Astrocyte of the cerebellum (primary cell): ENCODE measurements at regions of chr15 and their contacts with region 1.

Region 1: DNA sequence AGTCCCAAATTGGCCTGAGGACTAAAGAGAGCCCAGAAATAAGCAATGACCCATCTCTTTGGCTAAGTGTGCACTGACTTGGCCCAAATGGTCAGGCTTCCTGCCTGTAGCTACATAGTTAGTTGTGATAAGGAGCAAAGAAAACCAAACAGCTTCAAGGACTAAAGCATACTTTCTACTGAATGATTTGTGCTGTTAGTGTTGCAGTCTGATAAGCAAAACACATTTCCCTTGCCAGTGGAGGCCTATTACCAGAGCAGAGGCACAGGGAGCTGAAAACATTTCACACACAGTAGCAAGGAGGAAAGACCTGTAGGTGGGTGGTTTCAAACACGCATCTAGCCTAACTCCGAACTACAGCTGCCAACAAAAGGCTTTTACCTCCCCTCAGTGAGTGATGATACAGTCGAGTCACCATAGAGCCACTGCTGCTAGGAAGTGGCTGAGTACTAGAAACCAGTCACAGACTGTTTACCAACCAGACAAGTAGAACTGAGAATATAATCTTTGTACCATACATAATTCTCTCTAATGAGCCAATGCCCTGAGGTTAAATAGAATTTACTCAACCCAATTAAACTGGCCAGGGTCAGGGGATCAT is 222.3 kb upstream of the THBS1 start:
- DNase-seq: no peak
- H3K4me3 ChIP-seq: no peak overlapping the region
- CTCF ChIP-seq: no peak

Region 2: DNA sequence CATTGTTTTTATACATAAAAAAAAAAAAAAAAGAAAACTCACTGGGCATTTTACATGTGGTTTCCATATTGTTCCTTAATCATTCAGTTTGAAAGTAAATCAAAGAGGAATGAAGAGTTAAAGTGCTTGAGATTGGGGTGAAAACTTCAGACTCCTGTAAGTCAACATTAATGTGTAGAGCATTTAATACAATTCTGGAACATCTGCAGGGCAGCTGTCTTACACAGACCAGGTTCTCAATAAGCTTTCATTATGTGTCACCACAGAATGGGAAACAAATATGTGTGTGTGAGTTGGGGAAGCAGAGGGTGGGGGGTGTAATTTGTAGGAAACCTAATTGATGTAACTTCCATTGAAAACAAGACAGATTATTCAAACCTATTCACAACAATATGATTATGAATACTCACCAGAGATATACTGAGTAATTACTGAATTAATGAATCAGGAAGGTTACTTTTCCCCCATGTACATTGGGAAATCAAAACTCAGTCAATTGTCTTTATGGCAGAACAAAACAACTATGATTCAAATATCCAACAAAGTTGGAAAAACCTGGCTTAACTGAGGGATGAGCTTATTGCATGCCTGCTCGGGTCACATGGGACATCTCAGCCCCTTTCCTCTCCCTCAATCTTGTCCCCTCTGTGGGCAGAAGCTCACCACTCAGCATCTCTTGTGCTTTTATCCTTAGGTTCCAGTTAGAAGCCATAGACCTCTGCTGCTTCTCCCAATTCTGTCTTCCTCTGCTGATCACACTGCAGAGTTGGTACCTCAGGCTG is 58.9 kb before region 1 on chr15:
- in situ Hi-C with region 1: loop called (anchors 5 kb)
- DNase-seq: no peak
- H3K4me3 ChIP-seq: no peak overlapping the region
- CTCF ChIP-seq: no peak